ENCODE measurements at regions of chr7 and their contacts with region 1.

Region 1: GRCh38 chr7:42931834-42932651 is at the starts of genes MRPL32 and PSMA2:
- DNase-seq: peak; percentile 95
- H3K4me3 ChIP-seq: peak within 1 kb of the TSS; percentile 72 to 91 (median 88)
- H3K27ac ChIP-seq: peak within 1 kb of the TSS; percentile 83 to 91 (median 90)
- H3K4me1 ChIP-seq: peaks cover 21 to 55% (median 31%) of the 10 kb centered on the region in 4 donors
- H3K27me3 ChIP-seq: no peaks in the 10 kb centered on the region
- CTCF ChIP-seq: no peak
- EP300 ChIP-seq: no peak
- POLR2A ChIP-seq: peak; percentile 66
- total RNA-seq, gene MRPL32: 22.5 to 49.4 (median 36.4) TPM
- total RNA-seq, gene PSMA2: 5.8 to 61.2 (median 28.6) TPM

Region 2: DNA sequence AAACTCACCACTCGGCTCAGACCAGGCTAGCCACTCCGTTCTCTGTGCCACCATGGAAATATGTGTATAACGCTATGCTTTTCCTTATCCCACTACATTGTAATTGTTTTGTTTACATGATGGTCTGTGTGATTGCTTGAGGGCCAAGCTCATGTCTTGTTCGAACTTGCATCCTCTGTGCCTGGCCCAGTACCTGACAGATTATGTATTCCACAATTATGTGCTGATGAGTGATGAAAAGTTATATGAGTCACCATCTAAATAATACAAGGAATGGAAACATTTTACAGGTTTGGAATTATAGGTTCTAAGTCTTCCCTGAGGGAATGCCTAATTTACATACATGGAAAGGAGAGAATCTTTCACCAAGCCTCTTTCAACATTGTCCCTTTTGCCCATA is 157.6 kb before region 1 on chr7:
- in situ Hi-C with region 1: no loop called
- intact Hi-C with region 1: no loop called
- DNase-seq: no peak
- H3K4me3 ChIP-seq: no peak overlapping the region
- H3K27ac ChIP-seq: no peak overlapping the region
- H3K4me1 ChIP-seq: no peaks in the 10 kb centered on the region
- H3K27me3 ChIP-seq: no peaks in the 10 kb centered on the region
- CTCF ChIP-seq: no peak
- EP300 ChIP-seq: no peak
- POLR2A ChIP-seq: no peak

Region 3: GRCh38 chr7:43249823-43250145 is 317.7 kb after region 1 on chr7:
- in situ Hi-C with region 1: loop called in 1 of 4 experiments (anchors 10 kb)
- intact Hi-C with region 1: no loop called
- DNase-seq: no peak
- H3K4me3 ChIP-seq: peak overlapping the region in 1 of 4 donors; percentile 37
- H3K27ac ChIP-seq: peak overlapping the region in 3 of 4 donors; percentile 33 to 56 (median 46)
- H3K4me1 ChIP-seq: peaks cover 0 to 16% (median 4%) of the 10 kb centered on the region in 4 donors
- H3K27me3 ChIP-seq: no peaks in the 10 kb centered on the region
- CTCF ChIP-seq: no peak
- EP300 ChIP-seq: no peak
- POLR2A ChIP-seq: no peak

Region 4: DNA sequence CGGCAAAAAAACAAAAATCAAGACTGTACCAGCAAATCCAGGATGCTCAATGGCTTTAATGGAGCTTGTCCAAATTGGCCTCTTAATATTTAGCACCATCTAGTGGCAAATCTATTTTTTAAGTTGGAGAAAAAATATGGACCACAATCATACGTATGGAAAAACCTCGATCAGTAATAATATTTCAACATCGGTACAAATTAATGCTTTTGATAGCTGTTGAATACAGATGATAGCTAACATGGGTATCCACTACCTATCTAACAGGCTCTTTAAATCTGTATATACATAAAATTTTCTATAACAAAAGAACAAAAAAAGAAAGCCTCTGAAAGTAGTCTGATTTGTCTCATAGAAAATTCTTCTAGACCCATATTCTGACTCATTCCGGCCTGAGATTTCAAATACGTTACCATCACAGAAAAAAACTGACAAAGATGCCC is 768.0 kb after region 1 on chr7:
- in situ Hi-C with region 1: loop called in 2 of 4 experiments (anchors 25 kb)
- intact Hi-C with region 1: no loop called
- DNase-seq: no peak
- H3K4me3 ChIP-seq: no peak overlapping the region
- H3K27ac ChIP-seq: no peak overlapping the region
- H3K4me1 ChIP-seq: peaks cover 0 to 9% (median 0%) of the 10 kb centered on the region in 4 donors
- H3K27me3 ChIP-seq: no peaks in the 10 kb centered on the region
- CTCF ChIP-seq: peak; percentile 63 to 82 (median 70)
- EP300 ChIP-seq: no peak
- POLR2A ChIP-seq: no peak

Region 5: DNA sequence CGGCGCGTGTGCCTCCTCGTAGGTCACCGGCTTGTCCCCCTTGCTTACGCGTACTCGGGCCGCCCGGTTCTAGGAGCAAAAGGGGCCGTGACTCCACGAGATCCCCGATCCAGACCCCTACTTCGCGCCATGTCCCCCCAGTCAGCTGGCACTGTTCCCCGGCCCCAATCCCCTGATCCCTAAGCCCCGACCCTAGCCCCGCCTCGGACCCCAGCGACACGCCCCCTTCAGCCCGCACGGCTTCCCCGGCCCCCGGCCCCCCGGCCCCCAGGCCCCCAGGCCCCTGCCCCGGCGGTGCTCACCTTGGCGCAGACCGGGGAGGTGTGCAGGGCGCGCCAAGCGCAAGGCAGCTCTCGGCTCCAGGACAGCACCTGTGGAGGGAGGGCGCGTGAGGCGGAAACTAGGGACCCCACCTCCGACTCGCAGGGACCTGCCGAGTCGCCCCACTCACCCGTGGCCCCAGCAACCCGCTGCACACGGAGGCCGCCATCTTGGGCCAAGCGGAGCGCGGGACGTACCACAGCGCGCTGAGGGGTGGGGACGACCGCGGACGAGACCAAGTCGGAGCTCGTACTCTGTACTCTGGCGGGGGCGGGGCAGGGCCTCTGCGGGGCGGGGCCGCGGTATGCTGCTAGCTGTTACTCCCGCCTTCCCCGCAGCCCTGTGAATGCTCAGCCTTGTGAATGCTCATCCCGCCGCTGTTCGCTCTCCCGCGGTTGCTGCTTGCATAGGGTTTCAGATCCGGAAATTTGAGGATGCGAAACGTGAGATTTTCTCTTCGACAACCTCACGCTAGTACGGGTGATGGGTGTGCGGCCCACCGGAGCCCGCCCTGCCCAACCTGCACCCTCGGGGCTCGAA is 937.2 kb after region 1 on chr7 and contains the start of gene MRPS24:
- in situ Hi-C with region 1: loop called in 1 of 4 experiments (anchors 25 kb)
- intact Hi-C with region 1: no loop called
- DNase-seq: peak; percentile 96
- H3K4me3 ChIP-seq: peak within 1 kb of the TSS; percentile 75 to 95 (median 83)
- H3K27ac ChIP-seq: peak within 1 kb of the TSS; percentile 87 to 90 (median 88)
- H3K4me1 ChIP-seq: peaks cover 8 to 43% (median 26%) of the 10 kb centered on the region in 4 donors
- H3K27me3 ChIP-seq: no peaks in the 10 kb centered on the region
- CTCF ChIP-seq: no peak
- EP300 ChIP-seq: no peak
- POLR2A ChIP-seq: peak; percentile 54
- total RNA-seq, gene MRPS24: 22.8 to 110 (median 73.4) TPM

Measured in transverse colon (tissue), 4 donors.